ENCODE measurements at regions of chr9 and their contacts with region 1.

Region 1: GRCh38 chr9:121059998-121060636 is 10.0 kb upstream of the C5 start:
- DNase-seq: peak; percentile 37
- ATAC-seq: no peak
- H3K4me3 Mint-ChIP-seq: no peak overlapping the region
- H3K27ac Mint-ChIP-seq: no peak overlapping the region
- H3K4me1 Mint-ChIP-seq: peaks cover 16% of the 10 kb centered on the region
- H3K27me3 Mint-ChIP-seq: no peaks in the 10 kb centered on the region

Region 2: DNA sequence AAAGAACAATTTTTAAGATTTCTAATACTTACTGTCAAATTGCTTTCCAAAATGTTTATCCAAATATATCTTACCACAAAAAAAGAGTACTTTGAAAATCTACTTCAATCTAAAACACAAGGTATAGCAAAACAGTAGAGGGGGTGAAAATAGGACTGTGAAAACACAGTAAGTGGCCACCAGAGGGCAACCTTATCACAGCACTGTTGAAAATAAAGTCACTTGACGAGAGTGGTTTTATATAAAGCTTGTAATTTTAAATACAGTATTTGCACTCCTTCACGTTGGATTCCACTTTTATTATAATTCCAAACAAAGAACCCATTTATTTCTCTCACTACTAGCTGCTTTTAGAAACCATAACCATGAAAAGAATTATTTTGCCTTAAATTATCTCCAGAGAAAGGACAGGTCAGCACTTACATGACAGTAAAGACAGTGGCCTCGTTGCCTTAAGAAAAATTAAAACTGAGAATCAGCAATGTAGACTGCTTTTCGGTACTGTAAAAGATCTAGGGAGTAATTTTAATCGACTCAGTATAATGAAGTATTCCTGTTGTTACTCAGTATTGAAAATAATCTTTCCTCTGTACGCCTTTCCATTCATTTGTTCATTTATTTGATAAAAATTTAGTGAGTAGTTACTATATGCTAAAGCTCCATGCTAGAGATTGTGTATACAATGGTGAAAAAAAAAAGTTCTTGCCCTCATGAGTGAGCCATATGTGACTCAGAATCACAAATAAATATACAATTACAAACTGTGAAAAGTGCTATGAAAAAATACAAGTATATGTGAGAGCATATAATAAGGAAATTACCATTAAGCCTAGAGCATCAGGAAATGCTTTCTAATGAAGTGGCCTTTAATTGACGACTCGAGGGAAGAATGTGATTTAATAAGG is 440.1 kb before region 1 on chr9:
- CTCF ChIA-PET with region 1: no interaction called
- POLR2A ChIA-PET with region 1: no interaction called
- intact Hi-C with region 1: loop called in 1 of 2 experiments (anchors 10 kb)
- DNase-seq: peak; percentile 74
- ATAC-seq: peak; percentile 84
- H3K4me3 Mint-ChIP-seq: no peak overlapping the region
- H3K27ac Mint-ChIP-seq: no peak overlapping the region
- H3K4me1 Mint-ChIP-seq: peaks cover 5% of the 10 kb centered on the region
- H3K27me3 Mint-ChIP-seq: no peaks in the 10 kb centered on the region

Region 3: DNA sequence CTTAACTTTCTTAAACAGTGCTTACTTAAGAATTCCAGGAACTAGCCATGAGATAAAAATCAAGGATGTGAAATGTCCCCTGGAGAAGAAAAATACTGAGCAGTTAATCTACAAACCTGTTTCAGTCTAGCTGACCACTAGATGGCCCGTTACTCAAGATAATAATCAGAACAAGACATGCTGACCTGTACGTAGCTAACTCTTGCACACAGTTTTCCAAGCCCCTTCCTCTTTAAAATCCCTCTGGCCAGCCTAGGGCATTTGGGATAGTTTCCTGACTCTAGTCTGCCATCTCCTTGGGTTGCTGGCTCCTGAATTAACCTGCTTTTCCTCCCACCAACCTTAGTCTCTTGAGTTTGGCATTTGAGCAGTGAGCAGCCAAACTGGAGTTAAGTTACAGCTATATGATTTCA is 74.3 kb before region 1 on chr9:
- CTCF ChIA-PET with region 1: interaction called, 18 read pairs
- POLR2A ChIA-PET with region 1: no interaction called
- intact Hi-C with region 1: loop called (anchors 1 to 2 kb)
- DNase-seq: no peak
- ATAC-seq: no peak
- H3K4me3 Mint-ChIP-seq: no peak overlapping the region
- H3K27ac Mint-ChIP-seq: no peak overlapping the region
- H3K4me1 Mint-ChIP-seq: peaks cover 2% of the 10 kb centered on the region
- H3K27me3 Mint-ChIP-seq: no peaks in the 10 kb centered on the region

Region 4: GRCh38 chr9:121048618-121049017 is 11.5 kb before region 1 on chr9:
- CTCF ChIA-PET with region 1: interaction called, 25 read pairs
- POLR2A ChIA-PET with region 1: no interaction called
- intact Hi-C with region 1: no loop called
- DNase-seq: no peak
- ATAC-seq: no peak
- H3K4me3 Mint-ChIP-seq: no peak overlapping the region
- H3K27ac Mint-ChIP-seq: no peak overlapping the region
- H3K4me1 Mint-ChIP-seq: no peaks in the 10 kb centered on the region
- H3K27me3 Mint-ChIP-seq: no peaks in the 10 kb centered on the region

Region 5: GRCh38 chr9:121085661-121086060 is 25.5 kb after region 1 on chr9:
- CTCF ChIA-PET with region 1: interaction called, 10 read pairs
- POLR2A ChIA-PET with region 1: no interaction called
- intact Hi-C with region 1: no loop called
- DNase-seq: no peak
- ATAC-seq: no peak
- H3K4me3 Mint-ChIP-seq: no peak overlapping the region
- H3K27ac Mint-ChIP-seq: no peak overlapping the region
- H3K4me1 Mint-ChIP-seq: peaks cover 10% of the 10 kb centered on the region
- H3K27me3 Mint-ChIP-seq: no peaks in the 10 kb centered on the region

Measured in activated CD4-positive, alpha-beta T cell treated with anti-CD3 and anti-CD28 coated beads for 36 hours (primary cell).